GM12878 (cell line): ENCODE measurements at regions of chr2 and their contacts with region 1.

Region 1: GRCh38 chr2:20525041-20526035 is 78.5 kb downstream of the RHOB start:
- DNase-seq: peak; percentile 76
- ATAC-seq: peak; percentile 95
- H3K4me3 ChIP-seq: no peak overlapping the region
- H3K27ac ChIP-seq: peak overlapping the region; percentile 64
- H3K4me1 ChIP-seq: peaks cover 18% of the 10 kb centered on the region
- H3K27me3 ChIP-seq: no peaks in the 10 kb centered on the region
- CTCF ChIP-seq: peak in 1 of 3 experiments; percentile 37; a peak in 1 of 6 replicates
- EP300 ChIP-seq: peak; percentile 25 to 62; a peak in 2 of 4 replicates
- POLR2A ChIP-seq: 0 out of 2 replicates have a peak, but pooled peaks have one; percentile 49
- RAD21 ChIP-seq: no peak

Region 2: DNA sequence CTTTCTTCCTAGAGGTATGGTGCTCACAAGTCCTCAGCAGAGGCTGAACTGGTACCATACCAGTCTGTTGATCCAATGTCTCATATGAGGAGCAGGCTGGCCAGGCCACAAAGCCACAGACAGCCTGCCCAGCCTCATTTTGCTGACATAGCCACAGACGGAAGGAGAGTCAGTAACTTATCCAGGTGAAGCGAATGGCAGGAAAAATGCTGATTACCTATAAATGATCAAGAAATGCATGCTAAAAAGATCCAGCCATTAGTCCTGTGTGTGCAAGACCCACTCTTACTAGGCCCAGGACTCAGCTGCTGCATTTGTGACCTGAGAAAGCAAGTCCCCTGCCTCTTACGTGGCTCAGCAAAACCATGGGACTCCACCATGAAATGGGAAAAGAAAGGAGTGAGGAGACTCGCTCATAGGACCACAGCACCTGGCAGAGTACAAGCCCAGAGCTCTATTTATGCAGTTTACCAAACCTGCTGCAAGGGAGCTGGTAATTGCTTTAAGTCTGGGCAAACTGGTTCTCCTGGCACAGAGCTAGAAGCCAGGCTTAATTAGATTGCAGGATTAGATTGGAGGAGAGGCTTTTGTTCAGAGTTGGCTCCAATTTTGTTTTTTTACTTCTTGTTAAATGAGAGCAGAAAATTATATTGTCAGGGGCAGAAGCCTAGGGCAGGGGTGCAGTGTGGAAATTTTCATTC is 59.5 kb before region 1 on chr2:
- CTCF ChIA-PET with region 1: no interaction called
- POLR2A ChIA-PET with region 1: no interaction called
- RAD21 ChIA-PET with region 1: no interaction called
- SMC1A ChIA-PET with region 1: no interaction called
- in situ Hi-C with region 1: no loop called
- intact Hi-C with region 1: no loop called
- DNase-seq: no peak
- ATAC-seq: no peak
- H3K4me3 ChIP-seq: no peak overlapping the region
- H3K27ac ChIP-seq: no peak overlapping the region
- H3K4me1 ChIP-seq: no peaks in the 10 kb centered on the region
- H3K27me3 ChIP-seq: no peaks in the 10 kb centered on the region
- CTCF ChIP-seq: no peak
- EP300 ChIP-seq: no peak
- POLR2A ChIP-seq: no peak
- RAD21 ChIP-seq: no peak

Region 3: DNA sequence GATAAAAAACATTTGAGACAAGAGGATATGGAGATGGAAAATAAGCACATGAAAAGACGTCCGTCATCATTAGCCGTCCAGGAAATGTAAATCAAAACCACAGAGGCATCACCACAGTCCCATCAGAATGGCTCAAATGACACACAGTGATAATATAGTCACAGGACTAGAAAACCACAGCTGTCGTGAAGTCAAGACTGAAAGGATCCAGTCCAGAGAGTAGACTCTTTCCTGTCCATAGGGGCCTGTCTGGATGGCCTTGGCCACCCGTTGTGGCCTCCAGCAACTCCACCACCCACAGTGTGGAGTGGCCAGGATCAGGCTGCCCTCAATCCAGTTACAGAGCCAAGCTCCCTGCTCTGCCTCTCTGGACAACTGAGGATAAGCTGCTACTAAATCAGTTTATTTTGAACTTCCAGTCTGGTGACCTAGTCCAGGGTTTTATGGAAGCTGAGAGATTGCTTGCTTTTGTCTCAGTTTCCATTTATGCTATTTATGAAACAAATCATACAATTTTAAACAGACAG is 18.1 kb before region 1 on chr2:
- CTCF ChIA-PET with region 1: interaction called, 3 read pairs
- POLR2A ChIA-PET with region 1: interaction called, 5 read pairs
- RAD21 ChIA-PET with region 1: interaction called, 14 read pairs
- SMC1A ChIA-PET with region 1: interaction called, 17 read pairs
- in situ Hi-C with region 1: no loop called
- intact Hi-C with region 1: no loop called
- DNase-seq: peak; percentile 62
- ATAC-seq: peak; percentile 96
- H3K4me3 ChIP-seq: no peak overlapping the region
- H3K27ac ChIP-seq: no peak overlapping the region; the same call in 1 of the 2 replicates
- H3K4me1 ChIP-seq: peaks cover 12% of the 10 kb centered on the region
- H3K27me3 ChIP-seq: peaks cover 0 to 2% of the 10 kb centered on the region in 2 experiments; a peak in 1 of 4 replicates
- CTCF ChIP-seq: no peak
- EP300 ChIP-seq: peak; percentile 85 to 92
- POLR2A ChIP-seq: no peak
- RAD21 ChIP-seq: no peak

Region 4: GRCh38 chr2:20539133-20539719 is 13.9 kb after region 1 on chr2:
- CTCF ChIA-PET with region 1: interaction called, 4 read pairs
- POLR2A ChIA-PET with region 1: interaction called, 4 read pairs
- RAD21 ChIA-PET with region 1: no interaction called
- SMC1A ChIA-PET with region 1: interaction called, 10 read pairs
- in situ Hi-C with region 1: no loop called
- intact Hi-C with region 1: no loop called
- DNase-seq: no peak
- ATAC-seq: no peak
- H3K4me3 ChIP-seq: no peak overlapping the region
- H3K27ac ChIP-seq: no peak overlapping the region
- H3K4me1 ChIP-seq: no peaks in the 10 kb centered on the region
- H3K27me3 ChIP-seq: no peaks in the 10 kb centered on the region; a peak in 2 of 4 replicates
- CTCF ChIP-seq: no peak
- EP300 ChIP-seq: no peak
- POLR2A ChIP-seq: no peak
- RAD21 ChIP-seq: no peak

Region 5: DNA sequence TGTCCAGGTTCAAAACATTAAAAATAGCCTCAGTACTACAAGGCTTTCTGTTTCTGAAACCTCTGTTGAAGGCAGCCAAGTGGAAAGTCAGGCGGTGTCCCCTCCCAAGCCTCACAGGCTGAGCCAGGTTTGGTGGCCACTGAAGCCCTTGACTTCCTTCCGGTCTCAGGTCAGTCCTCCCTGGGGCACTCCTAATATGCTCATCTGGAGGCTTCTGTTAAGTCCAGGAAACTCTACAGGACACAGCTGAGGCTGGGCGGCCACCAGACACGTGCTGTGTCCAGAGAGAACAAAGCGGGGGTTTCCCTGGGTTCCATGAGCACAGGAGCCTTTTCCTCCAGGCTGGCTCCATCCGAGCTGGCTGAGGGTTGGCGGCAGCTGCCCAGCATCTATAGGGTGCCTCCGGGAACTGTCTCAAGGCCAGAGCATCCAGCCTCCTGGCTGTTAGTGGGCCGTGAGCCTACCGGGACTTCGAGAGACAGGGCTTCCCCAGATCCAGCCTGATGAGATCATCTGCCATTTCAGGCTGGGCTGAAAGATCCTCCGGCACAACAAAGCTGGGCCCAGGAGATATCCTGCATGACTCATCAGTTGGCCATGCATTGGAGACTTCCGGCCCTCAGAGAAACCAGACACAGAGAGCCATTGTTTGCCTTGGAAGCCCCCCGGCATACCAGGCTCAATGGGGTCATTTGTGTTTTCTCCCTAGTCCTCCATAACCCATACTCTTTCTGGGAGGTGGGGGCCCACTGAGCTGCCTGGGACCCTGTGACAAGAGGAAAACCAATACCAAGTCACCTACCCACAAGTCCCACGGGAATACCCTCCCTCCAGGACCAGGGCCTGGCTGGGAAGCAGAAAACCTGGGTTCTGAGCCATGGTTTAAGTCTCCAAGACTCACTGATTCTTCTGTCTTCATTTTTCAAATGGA is 53.8 kb after region 1 on chr2:
- CTCF ChIA-PET with region 1: interaction called, 20 read pairs
- POLR2A ChIA-PET with region 1: interaction called, 6 read pairs
- RAD21 ChIA-PET with region 1: interaction called, 30 read pairs
- SMC1A ChIA-PET with region 1: interaction called, 10 read pairs
- in situ Hi-C with region 1: no loop called
- intact Hi-C with region 1: loop called (anchors 2 kb)
- DNase-seq: peak; percentile 74
- ATAC-seq: peak; percentile 86
- H3K4me3 ChIP-seq: peak overlapping the region; percentile 49; the same call in 1 of the 2 replicates
- H3K27ac ChIP-seq: peak overlapping the region; percentile 86
- H3K4me1 ChIP-seq: peaks cover 46% of the 10 kb centered on the region
- H3K27me3 ChIP-seq: no peaks in the 10 kb centered on the region
- CTCF ChIP-seq: no peak
- EP300 ChIP-seq: 0 out of 4 replicates have a peak, but pooled peaks of 1 of the 2 experiments have one; percentile 46
- POLR2A ChIP-seq: no peak
- RAD21 ChIP-seq: 0 out of 2 replicates have a peak, but pooled peaks have one; percentile 2

Region 6: GRCh38 chr2:20595431-20596192 is 70.3 kb after region 1 on chr2:
- CTCF ChIA-PET with region 1: interaction called, 9 read pairs
- POLR2A ChIA-PET with region 1: interaction called, 11 read pairs
- RAD21 ChIA-PET with region 1: interaction called, 28 read pairs
- SMC1A ChIA-PET with region 1: interaction called, 37 read pairs
- in situ Hi-C with region 1: no loop called
- intact Hi-C with region 1: loop called (anchors 5 kb)
- DNase-seq: peak; percentile 85
- ATAC-seq: peak; percentile 92
- H3K4me3 ChIP-seq: peak overlapping the region; percentile 25; the same call in 1 of the 2 replicates
- H3K27ac ChIP-seq: peak overlapping the region; percentile 79
- H3K4me1 ChIP-seq: peaks cover 38% of the 10 kb centered on the region
- H3K27me3 ChIP-seq: no peaks in the 10 kb centered on the region
- CTCF ChIP-seq: no peak
- EP300 ChIP-seq: peak; percentile 13 to 50; a peak in 3 of 4 replicates
- POLR2A ChIP-seq: peak; percentile 81
- RAD21 ChIP-seq: 0 out of 2 replicates have a peak, but pooled peaks have one; percentile 5